Heart left ventricle (tissue), 16 donors: ENCODE measurements at regions of chr19 and their contacts with region 1.

Region 1: GRCh38 chr19:5690125-5690954 is at the start of gene RPL36:
- DNase-seq: peak; percentile 97 to 99 (median 98)
- ATAC-seq: peak; percentile 71 to 84 (median 78)
- H3K4me3 ChIP-seq: peak within 1 kb of the TSS; percentile 48 to 91 (median 77)
- H3K27ac ChIP-seq: peak within 1 kb of the TSS; percentile 67 to 95 (median 86)
- H3K4me1 ChIP-seq: peaks cover 4 to 57% (median 28%) of the 10 kb centered on the region in 12 donors
- H3K27me3 ChIP-seq: no peaks in the 10 kb centered on the region
- CTCF ChIP-seq: peak; percentile 94 to 100 (median 98)
- POLR2A ChIP-seq: peak in 1 of 2 donors; percentile 84
- total RNA-seq, gene RPL36: 255 to 475 (median 365) TPM

Region 2: DNA sequence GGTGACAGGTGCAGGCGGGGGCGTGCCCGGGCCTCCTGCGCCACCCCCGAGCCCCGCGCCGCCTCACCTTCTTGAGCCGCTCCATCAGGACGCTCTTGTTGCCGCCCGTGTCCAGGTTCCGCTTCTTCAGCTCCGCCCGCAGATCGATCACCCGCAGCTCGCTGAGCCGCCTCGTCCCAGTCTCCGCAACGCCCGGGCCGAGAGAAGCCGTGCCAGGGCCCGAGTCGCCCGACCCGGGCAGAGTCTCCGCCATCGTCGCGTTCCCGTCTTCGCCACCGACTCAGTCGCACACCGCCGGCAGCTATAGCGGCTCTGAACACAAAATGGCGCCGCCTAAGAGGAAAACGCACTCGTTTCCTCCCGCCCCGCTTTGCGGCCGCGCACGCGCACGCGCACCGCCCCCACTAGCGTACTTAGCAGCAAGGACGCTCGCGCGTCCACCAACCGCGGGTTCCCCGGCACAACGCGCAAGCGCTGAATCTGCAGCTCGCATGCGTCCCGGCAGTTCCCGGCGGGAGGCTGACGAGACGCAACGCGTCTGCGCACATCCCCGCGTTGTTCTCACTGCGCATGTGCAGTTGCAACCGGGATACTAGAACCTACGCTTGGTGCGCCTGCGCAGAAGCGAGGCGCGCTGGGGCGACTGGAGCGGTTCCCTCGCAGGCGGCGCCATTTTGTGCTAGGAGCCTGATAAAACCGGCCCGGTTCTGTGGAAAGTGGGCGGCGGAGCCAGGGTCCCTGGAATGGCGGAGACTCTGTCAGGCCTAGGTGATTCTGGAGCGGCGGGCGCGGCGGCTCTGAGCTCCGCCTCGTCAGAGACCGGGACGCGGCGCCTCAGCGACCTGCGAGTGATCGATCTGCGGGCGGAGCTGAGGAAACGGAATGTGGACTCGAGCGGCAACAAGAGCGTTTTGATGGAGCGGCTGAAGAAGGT is 67.6 kb before region 1 on chr19 and contains the starts of genes SAFB and SAFB2:
- intact Hi-C with region 1: loop called in 1 of 10 experiments (anchors 5 kb)
- DNase-seq: peak; percentile 99 to 100 (median 100)
- ATAC-seq: peak; percentile 94 to 98 (median 96)
- H3K4me3 ChIP-seq: peak within 1 kb of the TSS; percentile 84 to 99 (median 96)
- H3K27ac ChIP-seq: peak within 1 kb of the TSS; percentile 93 to 98 (median 94)
- H3K4me1 ChIP-seq: peaks cover 14 to 81% (median 69%) of the 10 kb centered on the region in 12 donors
- H3K27me3 ChIP-seq: no peaks in the 10 kb centered on the region
- CTCF ChIP-seq: peak in 1 of 12 donors; percentile 15
- POLR2A ChIP-seq: peak; percentile 70 to 82
- total RNA-seq, gene SAFB: 22.3 to 59.6 (median 48.0) TPM
- total RNA-seq, gene SAFB2: 14.2 to 56.7 (median 44.2) TPM

Region 3: GRCh38 chr19:5719961-5720790 is 29.8 kb after region 1 on chr19 and contains the starts of genes CATSPERD and LONP1:
- intact Hi-C with region 1: loop called in 5 of 10 experiments (anchors 1 to 2 kb)
- DNase-seq: peak; percentile 98 to 99 (median 99)
- ATAC-seq: peak; percentile 97 to 98 (median 98)
- H3K4me3 ChIP-seq: peak within 1 kb of the TSS; percentile 73 to 99 (median 88)
- H3K27ac ChIP-seq: peak within 1 kb of the TSS; percentile 56 to 98 (median 94)
- H3K4me1 ChIP-seq: peaks cover 2 to 38% (median 22%) of the 10 kb centered on the region in 12 donors
- H3K27me3 ChIP-seq: no peaks in the 10 kb centered on the region
- CTCF ChIP-seq: peak; percentile 76 to 99 (median 93)
- POLR2A ChIP-seq: peak in 1 of 2 donors; percentile 46
- total RNA-seq, gene CATSPERD: not detected
- total RNA-seq, gene LONP1: 61.2 to 108 (median 88.6) TPM

Region 4: DNA sequence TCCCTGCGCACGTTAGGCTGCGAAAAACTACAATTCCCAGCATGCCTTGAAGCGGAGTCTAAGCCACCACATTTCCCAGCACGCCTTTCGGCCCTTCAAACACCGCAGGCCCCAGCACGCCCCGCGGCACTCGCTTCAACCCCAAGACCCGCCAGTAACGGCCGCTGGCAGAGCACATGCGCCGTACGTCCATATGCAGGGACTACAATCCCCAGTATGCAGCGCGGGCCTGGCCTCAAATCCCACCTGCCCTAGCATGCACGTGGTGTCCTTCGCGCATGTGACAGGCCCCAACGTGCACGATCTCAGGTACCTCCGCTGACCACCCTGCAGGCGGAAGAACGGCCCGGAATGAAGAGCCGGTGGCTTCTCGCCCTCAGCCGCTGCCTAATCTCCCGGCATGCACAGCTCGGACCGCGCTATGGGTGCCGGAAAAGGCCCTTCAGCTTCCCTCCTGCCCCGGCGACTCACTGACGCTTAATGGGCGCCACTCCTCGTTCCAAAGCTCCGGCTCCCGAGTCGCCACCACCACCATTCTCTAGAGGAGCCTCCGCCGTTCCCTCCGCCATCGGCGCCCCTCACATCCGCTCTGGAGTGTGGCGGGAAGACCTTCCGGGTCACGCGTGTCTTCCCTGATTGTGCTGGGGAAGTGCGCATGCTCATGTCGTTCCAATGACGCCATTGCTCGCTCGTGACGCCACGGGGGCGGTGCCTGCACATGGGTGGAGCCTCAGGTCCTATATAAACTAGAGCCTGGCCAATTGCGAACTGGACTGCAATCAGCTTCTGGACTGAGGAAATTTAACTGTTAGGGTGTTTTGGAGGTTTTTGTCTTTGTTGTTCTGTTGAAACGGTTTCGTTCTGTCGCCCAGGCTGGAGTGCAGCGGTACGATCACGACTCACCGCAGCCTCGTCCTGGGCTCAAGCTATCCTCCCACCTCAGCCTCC is 100.5 kb after region 1 on chr19 and contains the start of gene DUS3L:
- intact Hi-C with region 1: loop called in 1 of 10 experiments (anchors 10 kb)
- DNase-seq: peak; percentile 95 to 98 (median 97)
- ATAC-seq: peak; percentile 97
- H3K4me3 ChIP-seq: peak within 1 kb of the TSS; percentile 59 to 97 (median 82)
- H3K27ac ChIP-seq: peak within 1 kb of the TSS; percentile 90 to 100 (median 96)
- H3K4me1 ChIP-seq: peaks cover 0 to 11% (median 6%) of the 10 kb centered on the region in 12 donors
- H3K27me3 ChIP-seq: no peaks in the 10 kb centered on the region
- CTCF ChIP-seq: no peak
- POLR2A ChIP-seq: peak in 1 of 2 donors; percentile 48
- total RNA-seq, gene DUS3L: 12.0 to 19.9 (median 15.3) TPM

Region 5: GRCh38 chr19:5904352-5905113 is 214.2 kb after region 1 on chr19 and contains the start of gene VMAC:
- intact Hi-C with region 1: loop called in 1 of 10 experiments (anchors 5 kb)
- DNase-seq: peak; percentile 100
- ATAC-seq: peak; percentile 84 to 91 (median 90)
- H3K4me3 ChIP-seq: peak within 1 kb of the TSS; percentile 61 to 98 (median 86)
- H3K27ac ChIP-seq: peak within 1 kb of the TSS; percentile 57 to 95 (median 91)
- H3K4me1 ChIP-seq: peaks cover 4 to 38% (median 23%) of the 10 kb centered on the region in 12 donors
- H3K27me3 ChIP-seq: no peaks in the 10 kb centered on the region
- CTCF ChIP-seq: no peak
- POLR2A ChIP-seq: peak in 1 of 2 donors; percentile 70
- total RNA-seq, gene VMAC: 1.7 to 3.9 (median 2.3) TPM

Region 6: DNA sequence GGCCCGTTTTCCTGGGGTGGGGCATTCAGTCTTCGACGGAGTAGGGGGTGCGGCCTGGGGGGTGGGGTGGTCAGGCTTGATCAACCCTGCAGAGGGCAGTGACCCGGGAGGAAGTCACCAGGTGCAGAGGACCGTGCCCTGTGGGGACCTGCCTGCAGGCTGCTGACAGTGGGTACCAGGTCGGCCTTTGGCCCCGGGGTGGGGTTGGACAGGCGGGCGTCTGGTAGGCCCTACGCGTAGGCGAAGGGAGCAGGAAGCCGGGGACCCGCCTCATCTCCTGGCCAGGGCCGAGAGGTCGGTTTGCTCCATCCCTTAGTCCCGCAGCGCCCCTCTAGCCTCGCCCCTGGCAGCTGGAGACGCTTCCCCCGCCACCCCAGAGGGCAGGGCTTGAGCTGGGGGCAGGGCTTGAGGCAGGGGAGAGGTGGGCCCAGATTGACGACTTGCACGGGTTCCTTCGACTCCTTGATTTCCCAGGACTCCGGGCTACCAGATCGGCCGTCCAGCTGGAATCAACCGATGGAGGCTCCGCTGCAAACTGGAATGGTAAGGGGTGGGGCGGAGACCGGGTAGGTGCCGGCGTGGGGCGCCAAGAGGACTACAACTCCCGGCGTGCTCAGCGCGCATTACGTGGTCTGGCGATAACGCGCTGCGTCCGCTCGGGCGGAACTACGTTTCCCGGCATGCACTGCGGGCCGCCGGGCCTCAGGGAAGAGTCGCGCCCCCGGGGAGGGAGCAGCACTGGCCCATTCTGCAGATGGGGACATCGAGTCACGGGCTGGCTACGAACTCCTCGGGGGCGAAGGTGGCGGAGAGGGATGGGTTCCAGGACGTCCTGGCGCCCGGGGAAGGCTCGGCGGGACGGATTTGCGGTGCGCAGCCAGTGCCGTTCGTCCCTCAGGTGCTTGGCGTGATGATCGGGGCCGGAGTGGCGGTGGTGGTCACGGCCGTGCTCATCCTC is 1845.0 kb after region 1 on chr19 and contains the start of gene PNPLA6:
- intact Hi-C with region 1: loop called in 1 of 10 experiments (anchors 10 kb)
- DNase-seq: peak; percentile 96 to 98 (median 97)
- ATAC-seq: peak; percentile 78 to 90 (median 86)
- H3K4me3 ChIP-seq: peak within 1 kb of the TSS; percentile 62 to 98 (median 86)
- H3K27ac ChIP-seq: peak within 1 kb of the TSS; percentile 57 to 96 (median 93)
- H3K4me1 ChIP-seq: peaks cover 0 to 25% (median 10%) of the 10 kb centered on the region in 12 donors
- H3K27me3 ChIP-seq: no peaks in the 10 kb centered on the region
- CTCF ChIP-seq: no peak
- POLR2A ChIP-seq: peak in 1 of 2 donors; percentile 68
- total RNA-seq, gene PNPLA6: 41.4 to 105 (median 49.9) TPM